ENCODE measurements at regions of chr7 and their contacts with region 1.

Region 1: DNA sequence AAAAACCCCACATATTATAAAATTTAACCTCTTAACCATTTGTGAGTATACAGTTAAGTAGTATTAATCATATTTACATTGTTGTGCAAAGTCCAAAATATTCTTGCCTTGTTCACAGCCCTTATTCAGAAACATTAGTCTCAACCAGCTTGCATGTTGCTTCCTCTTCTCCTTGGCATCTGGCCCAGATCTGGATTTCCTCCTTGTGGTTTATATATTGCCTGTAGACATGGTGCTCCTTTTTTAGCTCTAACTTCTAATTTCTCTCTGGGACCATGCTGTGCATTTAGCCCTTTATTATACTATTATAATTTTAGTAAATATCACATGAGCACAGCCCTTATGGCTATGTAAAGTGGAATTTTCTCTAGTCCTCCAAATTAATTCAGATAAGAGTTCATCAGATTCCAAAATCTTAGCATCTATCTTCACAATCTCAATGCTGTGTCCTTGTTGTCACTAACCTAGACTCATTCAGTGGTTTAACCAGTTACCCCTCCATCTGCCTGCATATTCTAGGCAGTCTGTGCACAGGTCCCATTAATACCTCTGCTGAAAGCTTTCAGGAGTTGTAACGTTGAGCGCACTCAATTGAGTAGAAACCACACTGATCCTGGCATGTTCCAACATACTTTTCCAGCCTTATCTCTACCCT is 7.9 kb downstream of the CPED1 start:
- DNase-seq: peak; percentile 88
- H3K4me3 ChIP-seq: no peak overlapping the region
- H3K27ac ChIP-seq: no peak overlapping the region
- H3K4me1 ChIP-seq: peaks cover 57% of the 10 kb centered on the region
- H3K27me3 ChIP-seq: no peaks in the 10 kb centered on the region
- CTCF ChIP-seq: no peak

Region 2: GRCh38 chr7:120691915-120692314 is 304.5 kb before region 1 on chr7:
- CTCF ChIA-PET with region 1: no interaction called
- POLR2A ChIA-PET with region 1: no interaction called
- intact Hi-C with region 1: no loop called
- DNase-seq: no peak
- H3K4me3 ChIP-seq: no peak overlapping the region
- H3K27ac ChIP-seq: no peak overlapping the region
- H3K4me1 ChIP-seq: no peaks in the 10 kb centered on the region
- H3K27me3 ChIP-seq: no peaks in the 10 kb centered on the region
- CTCF ChIP-seq: no peak

Region 3: DNA sequence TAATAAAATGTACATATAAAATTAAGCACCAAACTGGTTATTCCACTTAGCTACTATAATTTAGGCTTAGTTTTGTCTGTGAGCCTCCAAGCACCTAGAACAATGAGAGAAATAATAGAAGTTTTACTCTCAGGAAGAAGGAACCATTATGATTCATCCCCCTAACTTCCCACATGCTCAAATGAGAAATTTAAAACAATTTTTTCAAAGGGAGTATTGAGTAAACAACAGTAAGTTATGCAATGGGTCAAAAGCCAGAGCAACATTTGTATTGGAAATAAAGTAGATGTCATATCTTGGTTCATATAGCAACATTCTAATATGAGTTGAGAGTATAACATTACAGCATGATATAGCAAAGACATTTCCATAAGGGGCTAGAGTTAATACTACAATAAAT is 24.2 kb after region 1 on chr7:
- CTCF ChIA-PET with region 1: no interaction called
- POLR2A ChIA-PET with region 1: no interaction called
- intact Hi-C with region 1: loop called (anchors 2 kb)
- DNase-seq: no peak
- H3K4me3 ChIP-seq: no peak overlapping the region
- H3K27ac ChIP-seq: no peak overlapping the region
- H3K4me1 ChIP-seq: peaks cover 17% of the 10 kb centered on the region
- H3K27me3 ChIP-seq: no peaks in the 10 kb centered on the region
- CTCF ChIP-seq: no peak

Region 4: DNA sequence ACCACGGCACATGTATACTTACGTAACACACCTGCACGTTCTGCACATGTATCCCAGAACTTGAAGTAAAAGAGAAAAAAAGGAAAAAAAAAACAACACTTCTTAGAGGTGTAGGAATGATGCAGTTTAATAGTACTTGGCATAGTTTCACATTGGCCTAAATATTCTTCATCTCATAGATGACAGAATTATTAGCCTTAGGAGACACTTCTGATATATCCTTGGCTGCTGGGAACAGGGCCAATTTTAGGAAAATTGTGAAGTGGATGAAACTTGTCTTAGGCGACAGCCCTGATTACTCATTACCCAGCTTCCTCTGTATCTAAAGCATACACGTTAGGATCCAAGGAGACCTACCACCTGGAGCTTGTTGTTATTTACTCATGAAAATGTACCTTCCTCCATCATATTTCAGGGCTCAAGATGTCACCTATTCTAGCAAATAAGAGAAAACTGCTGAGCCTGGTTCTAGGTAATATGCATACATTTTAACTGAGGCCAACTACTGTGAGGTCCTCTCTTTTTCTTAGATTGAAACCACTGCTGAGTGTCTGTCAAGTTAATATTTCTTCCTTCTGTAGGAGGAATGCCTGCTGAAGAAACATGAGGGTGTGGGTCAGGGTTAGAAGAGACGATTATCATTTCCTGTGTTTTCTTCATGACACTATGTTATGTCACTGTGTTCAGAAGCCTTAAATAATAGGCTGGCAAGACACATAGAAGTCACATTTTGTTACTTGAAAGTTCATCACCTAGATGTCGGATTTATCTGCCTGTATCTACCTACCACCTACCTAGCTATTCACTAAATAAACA is 36.4 kb after region 1 on chr7:
- CTCF ChIA-PET with region 1: no interaction called
- POLR2A ChIA-PET with region 1: interaction called, 3 read pairs
- intact Hi-C with region 1: loop called (anchors 2 kb)
- DNase-seq: peak; percentile 68
- H3K4me3 ChIP-seq: no peak overlapping the region
- H3K27ac ChIP-seq: peak overlapping the region; percentile 5
- H3K4me1 ChIP-seq: peaks cover 25% of the 10 kb centered on the region
- H3K27me3 ChIP-seq: no peaks in the 10 kb centered on the region
- CTCF ChIP-seq: no peak

Measured in A673 (cell line).